ENCODE measurements at regions of chrX and their contacts with region 1.

Region 1: DNA sequence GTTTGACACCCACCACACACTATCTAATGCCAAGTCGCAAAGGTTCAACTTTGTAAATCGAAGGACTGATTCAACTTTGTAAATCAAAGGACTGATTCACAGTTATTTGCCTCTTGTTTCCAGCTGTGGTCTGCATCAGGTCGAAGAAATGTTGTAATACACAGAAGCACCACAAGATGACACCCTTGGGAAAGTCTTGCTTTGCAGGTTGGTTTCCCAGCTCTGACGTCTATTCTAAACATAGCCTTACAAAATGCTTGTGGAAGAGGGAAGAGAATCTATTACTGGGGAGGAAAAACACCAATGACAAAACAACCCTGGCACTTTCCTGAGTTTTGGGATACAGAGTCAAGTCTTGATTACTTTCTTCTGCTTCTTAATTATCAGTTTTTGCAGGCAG is 35.3 kb downstream of the SUPT20HL1 start:
- DNase-seq: peak; percentile 40
- H3K27ac ChIP-seq: no peak overlapping the region
- CTCF ChIP-seq: peak; percentile 73

Region 2: DNA sequence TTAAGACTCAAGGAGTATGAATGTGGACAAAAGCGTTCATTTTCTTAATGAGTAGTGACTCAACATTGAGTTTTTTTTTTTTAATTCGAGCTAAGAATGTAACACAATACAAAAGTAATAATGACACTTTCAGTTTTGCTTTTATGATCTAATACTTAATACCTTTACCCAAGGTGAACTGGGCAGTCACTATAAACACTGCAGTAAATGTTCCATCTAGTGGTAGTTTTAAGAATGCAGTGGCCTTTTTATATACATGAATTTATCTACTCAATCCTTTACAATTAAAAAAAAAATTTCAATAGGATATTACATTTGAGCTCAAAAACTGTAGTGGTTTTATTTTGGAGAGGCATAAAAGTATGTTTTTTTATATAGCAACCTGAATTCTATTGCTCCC is 103.2 kb after region 1 on chrX:
- CTCF ChIA-PET with region 1: interaction called, 19 read pairs
- POLR2A ChIA-PET with region 1: no interaction called
- DNase-seq: peak; percentile 11
- H3K27ac ChIP-seq: no peak overlapping the region
- CTCF ChIP-seq: peak; percentile 69

Region 3: GRCh38 chrX:24760363-24761000 is 364.7 kb after region 1 on chrX:
- CTCF ChIA-PET with region 1: no interaction called
- POLR2A ChIA-PET with region 1: no interaction called
- DNase-seq: no peak
- H3K27ac ChIP-seq: no peak overlapping the region
- CTCF ChIP-seq: no peak

Measured in RWPE1 (cell line).